CD14-positive monocyte (primary cell): ENCODE measurements at regions of chr5 and their contacts with region 1.

Region 1: GRCh38 chr5:14644623-14645237 is 19.8 kb upstream of the OTULIN start:
- DNase-seq: no peak
- H3K4me3 ChIP-seq: no peak overlapping the region
- H3K4me3 Mint-ChIP-seq: no peak overlapping the region
- H3K27ac ChIP-seq: no peak overlapping the region
- H3K27ac Mint-ChIP-seq: no peak overlapping the region
- H3K4me1 ChIP-seq: peaks cover 0 to 3% of the 10 kb centered on the region in 2 donors
- H3K4me1 Mint-ChIP-seq: no peaks in the 10 kb centered on the region
- H3K27me3 ChIP-seq: no peaks in the 10 kb centered on the region
- H3K27me3 Mint-ChIP-seq: peaks cover 1 to 5% (median 4%) of the 10 kb centered on the region in 3 donors
- CTCF ChIP-seq: no peak

Region 2: DNA sequence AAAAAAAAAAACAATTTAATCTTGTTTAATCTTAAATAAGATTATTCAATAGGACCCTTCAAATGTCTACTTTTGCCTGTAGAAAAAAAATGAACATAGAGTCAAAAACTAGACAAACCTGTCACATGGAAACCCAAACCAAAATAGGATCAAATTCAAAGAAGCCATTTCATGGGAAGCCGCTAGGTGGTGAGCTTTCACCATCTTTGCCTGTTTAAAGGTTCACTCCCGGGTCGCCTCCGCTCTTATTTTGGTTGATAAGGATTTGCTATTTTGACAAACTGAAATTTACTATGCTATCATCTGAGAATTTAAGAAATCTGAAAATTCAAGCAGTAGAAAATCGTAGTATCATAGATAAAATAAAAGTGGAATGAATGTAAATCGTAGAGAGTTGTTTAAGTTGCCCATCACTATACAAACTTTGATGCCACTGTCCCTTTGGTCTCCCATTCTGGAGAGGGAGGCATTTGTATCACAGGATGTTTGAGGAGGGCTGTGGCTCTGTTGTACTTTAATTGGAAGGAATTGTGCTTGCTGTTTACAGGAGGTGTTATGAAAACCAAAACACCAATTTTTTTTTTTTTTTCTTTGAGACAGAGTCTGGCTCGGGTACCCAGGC is 656.8 kb before region 1 on chr5:
- intact Hi-C with region 1: loop called (anchors 10 kb)
- DNase-seq: peak; percentile 7 to 25 (median 15)
- H3K4me3 ChIP-seq: no peak overlapping the region
- H3K4me3 Mint-ChIP-seq: peak overlapping the region in 1 of 2 donors; percentile 11
- H3K27ac ChIP-seq: no peak overlapping the region
- H3K27ac Mint-ChIP-seq: no peak overlapping the region
- H3K4me1 ChIP-seq: no peaks in the 10 kb centered on the region
- H3K4me1 Mint-ChIP-seq: peaks cover 1% of the 10 kb centered on the region
- H3K27me3 ChIP-seq: no peaks in the 10 kb centered on the region
- H3K27me3 Mint-ChIP-seq: peaks cover 2 to 14% (median 2%) of the 10 kb centered on the region in 3 donors
- CTCF ChIP-seq: peak; percentile 87

Region 3: GRCh38 chr5:13994621-13995253 is 650.0 kb before region 1 on chr5:
- intact Hi-C with region 1: loop called (anchors 10 kb)
- DNase-seq: no peak
- H3K4me3 ChIP-seq: no peak overlapping the region
- H3K4me3 Mint-ChIP-seq: no peak overlapping the region
- H3K27ac ChIP-seq: no peak overlapping the region
- H3K27ac Mint-ChIP-seq: no peak overlapping the region
- H3K4me1 ChIP-seq: no peaks in the 10 kb centered on the region
- H3K4me1 Mint-ChIP-seq: no peaks in the 10 kb centered on the region
- H3K27me3 ChIP-seq: no peaks in the 10 kb centered on the region
- H3K27me3 Mint-ChIP-seq: peaks cover 5 to 13% (median 5%) of the 10 kb centered on the region in 3 donors
- CTCF ChIP-seq: no peak

Region 4: DNA sequence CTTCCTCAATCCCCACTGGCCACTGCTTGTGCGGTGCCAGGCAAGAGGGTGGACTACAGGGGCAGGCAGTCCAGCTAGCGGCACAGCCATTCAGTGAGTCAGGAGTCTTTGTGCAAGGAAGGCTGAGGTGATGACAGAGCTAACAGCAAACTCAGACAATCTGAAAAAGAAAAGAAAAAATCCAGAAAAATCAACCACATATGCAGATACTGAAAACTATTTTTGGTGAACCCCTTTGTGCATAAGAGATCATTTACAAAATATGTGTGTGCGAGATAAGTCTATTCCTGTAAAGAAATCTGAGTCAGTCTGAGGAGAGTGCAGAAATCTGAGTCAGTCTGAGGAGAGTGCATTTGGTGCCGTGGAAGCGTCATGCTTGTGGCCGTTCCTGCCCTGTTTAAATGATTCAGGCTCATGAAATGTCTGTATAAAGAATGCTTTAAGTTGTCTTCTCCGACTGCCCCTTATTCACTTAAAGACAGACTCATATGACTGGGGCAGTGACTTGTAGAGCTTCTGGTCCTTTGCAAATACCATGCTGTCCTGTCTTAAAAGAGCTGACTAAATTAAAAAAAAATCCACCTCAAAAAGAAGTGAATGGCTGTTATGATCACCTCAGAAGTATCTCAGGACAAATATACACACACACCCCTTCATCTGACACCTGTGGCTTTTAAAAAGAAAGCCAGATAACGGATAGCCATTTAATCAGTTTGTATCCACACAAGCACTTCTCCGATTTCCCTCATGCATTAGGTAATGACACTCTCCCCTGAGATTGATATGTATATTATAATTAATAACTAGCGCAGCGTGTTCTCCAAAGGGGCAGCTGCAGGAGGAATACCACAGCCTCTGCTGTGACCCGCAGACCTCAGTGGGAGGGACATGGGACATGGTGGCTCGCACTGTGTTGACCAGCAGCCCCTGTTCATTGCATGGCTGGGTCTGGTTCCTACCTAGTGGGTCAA is 454.3 kb before region 1 on chr5:
- intact Hi-C with region 1: no loop called
- DNase-seq: no peak
- H3K4me3 ChIP-seq: no peak overlapping the region
- H3K4me3 Mint-ChIP-seq: no peak overlapping the region
- H3K27ac ChIP-seq: no peak overlapping the region
- H3K27ac Mint-ChIP-seq: no peak overlapping the region
- H3K4me1 ChIP-seq: peaks cover 4 to 10% of the 10 kb centered on the region in 2 donors
- H3K4me1 Mint-ChIP-seq: peaks cover 27% of the 10 kb centered on the region
- H3K27me3 ChIP-seq: no peaks in the 10 kb centered on the region
- H3K27me3 Mint-ChIP-seq: no peaks in the 10 kb centered on the region
- CTCF ChIP-seq: no peak

Region 5: DNA sequence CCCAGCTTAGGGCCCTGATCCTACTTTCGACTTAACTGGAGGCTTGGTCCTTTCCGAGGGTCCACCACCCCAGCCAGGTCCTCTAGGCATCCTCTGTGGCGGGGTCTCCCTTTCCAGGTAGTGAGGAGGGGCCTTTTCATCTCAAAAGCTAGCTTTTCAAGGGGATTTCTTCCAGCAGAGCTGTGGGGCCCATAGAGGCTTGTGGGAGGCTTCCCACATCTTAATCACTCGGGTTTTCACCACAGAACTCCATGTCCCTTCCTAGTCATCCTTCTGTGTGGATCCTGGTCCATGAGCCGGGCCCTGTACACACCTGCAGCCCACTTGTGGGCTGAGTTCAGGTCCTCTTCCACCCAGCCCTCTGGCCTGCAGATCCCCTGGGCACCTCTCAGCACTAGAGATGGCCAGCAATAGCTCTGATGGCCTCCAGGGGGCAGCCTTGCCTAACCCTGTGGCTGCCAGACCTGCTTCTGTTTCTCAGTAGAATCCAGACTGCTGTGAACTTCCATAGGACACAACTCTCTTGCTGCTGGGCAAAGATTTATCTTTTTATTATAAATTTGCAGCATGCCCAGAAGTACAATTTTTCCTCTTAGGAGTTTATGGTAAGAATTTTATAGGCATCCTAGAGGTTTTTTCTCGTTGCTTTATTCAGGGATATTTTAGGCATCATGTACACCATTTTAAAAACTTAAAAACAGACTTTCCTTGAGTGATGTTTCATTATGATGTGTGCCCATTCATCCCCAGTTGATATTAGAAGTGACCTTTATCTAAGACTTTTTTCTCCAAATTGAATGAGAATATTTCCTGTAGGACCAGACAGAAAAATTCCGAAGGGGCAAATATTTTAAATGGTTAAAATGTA is 292.7 kb before region 1 on chr5:
- intact Hi-C with region 1: loop called (anchors 2 to 5 kb)
- DNase-seq: peak; percentile 64 to 80 (median 69)
- H3K4me3 ChIP-seq: peak overlapping the region in 1 of 3 experiments; percentile 54
- H3K4me3 Mint-ChIP-seq: peak overlapping the region in 1 of 2 donors; percentile 74
- H3K27ac ChIP-seq: peak overlapping the region; percentile 3 to 47
- H3K27ac Mint-ChIP-seq: peak overlapping the region in 5 of 7 donors; percentile 45 to 83 (median 55)
- H3K4me1 ChIP-seq: peaks cover 33 to 43% of the 10 kb centered on the region in 2 donors
- H3K4me1 Mint-ChIP-seq: peaks cover 44% of the 10 kb centered on the region
- H3K27me3 ChIP-seq: no peaks in the 10 kb centered on the region
- H3K27me3 Mint-ChIP-seq: peaks cover 0 to 1% (median 0%) of the 10 kb centered on the region in 3 donors
- CTCF ChIP-seq: peak; percentile 98

Region 6: DNA sequence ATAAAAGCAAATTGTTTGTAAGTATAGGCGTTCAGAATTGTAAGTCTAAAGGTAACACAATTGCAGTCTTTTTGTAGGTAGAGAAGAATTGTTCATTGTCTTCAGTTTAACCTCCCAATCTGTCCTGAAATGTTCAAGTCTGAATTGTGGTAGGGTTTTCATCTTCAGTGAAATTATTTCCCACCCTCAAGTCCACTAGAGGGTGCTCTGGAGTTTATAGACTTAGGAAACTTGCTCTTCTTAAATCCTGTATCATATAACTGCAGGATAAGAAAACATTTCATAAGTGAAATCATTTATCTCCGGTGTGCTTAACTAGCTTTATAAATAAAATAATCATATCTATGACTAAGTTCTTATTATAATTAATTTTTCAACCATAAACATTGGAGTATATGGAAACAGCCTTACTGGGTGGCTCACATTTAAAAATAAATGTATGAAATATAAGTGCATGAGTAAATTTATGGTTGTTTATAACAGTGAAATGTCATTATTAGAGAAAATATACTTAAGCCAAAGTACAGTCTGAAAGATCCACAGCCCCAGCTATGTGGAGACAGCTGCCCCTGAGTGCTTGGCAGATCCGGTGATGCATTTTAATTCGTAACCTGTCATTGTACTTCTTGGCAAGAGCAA is 245.6 kb before region 1 on chr5:
- intact Hi-C with region 1: loop called (anchors 2 to 5 kb)
- DNase-seq: peak; percentile 18 to 39 (median 21)
- H3K4me3 ChIP-seq: no peak overlapping the region
- H3K4me3 Mint-ChIP-seq: no peak overlapping the region
- H3K27ac ChIP-seq: no peak overlapping the region
- H3K27ac Mint-ChIP-seq: peak overlapping the region in 1 of 7 donors; percentile 58
- H3K4me1 ChIP-seq: no peaks in the 10 kb centered on the region
- H3K4me1 Mint-ChIP-seq: no peaks in the 10 kb centered on the region
- H3K27me3 ChIP-seq: no peaks in the 10 kb centered on the region
- H3K27me3 Mint-ChIP-seq: peaks cover 0 to 3% (median 0%) of the 10 kb centered on the region in 3 donors
- CTCF ChIP-seq: peak; percentile 79

Region 7: DNA sequence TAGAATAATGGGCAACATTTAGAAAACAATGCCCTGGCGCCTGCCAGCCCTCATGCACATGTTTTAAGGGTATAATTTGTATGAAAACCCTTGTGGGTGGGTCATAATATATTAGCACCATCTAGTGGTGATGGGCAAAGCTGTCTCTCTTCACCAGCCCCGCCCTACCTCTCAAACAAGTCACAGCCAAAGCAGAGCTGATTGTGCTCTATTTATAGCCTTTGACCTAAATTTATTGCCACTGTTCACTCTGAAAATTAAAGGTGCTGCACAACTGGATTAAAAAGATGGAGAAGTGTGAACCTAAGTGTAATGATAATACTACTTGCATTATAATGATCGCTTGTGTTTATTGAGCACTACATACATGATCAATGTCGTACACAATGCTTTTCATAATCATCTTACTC is 358.8 kb after region 1 on chr5:
- intact Hi-C with region 1: no loop called
- DNase-seq: peak; percentile 44 to 64 (median 61)
- H3K4me3 ChIP-seq: no peak overlapping the region
- H3K4me3 Mint-ChIP-seq: no peak overlapping the region
- H3K27ac ChIP-seq: no peak overlapping the region
- H3K27ac Mint-ChIP-seq: peak overlapping the region in 1 of 7 donors; percentile 8
- H3K4me1 ChIP-seq: peaks cover 22 to 32% of the 10 kb centered on the region in 2 donors
- H3K4me1 Mint-ChIP-seq: peaks cover 27% of the 10 kb centered on the region
- H3K27me3 ChIP-seq: peaks cover 0 to 6% of the 10 kb centered on the region in 2 donors
- H3K27me3 Mint-ChIP-seq: peaks cover 5 to 18% (median 9%) of the 10 kb centered on the region in 3 donors
- CTCF ChIP-seq: peak; percentile 82